ENCODE measurements at regions of chr20 and their contacts with region 1.

Region 1: GRCh38 chr20:52129611-52130010 is 62.0 kb downstream of the ZFP64 start:
- DNase-seq: no peak
- H3K4me3 ChIP-seq: no peak overlapping the region
- H3K27ac ChIP-seq: no peak overlapping the region
- H3K4me1 ChIP-seq: peaks cover 0 to 14% (median 3%) of the 10 kb centered on the region in 4 experiments
- H3K27me3 ChIP-seq: no peaks in the 10 kb centered on the region

Region 2: DNA sequence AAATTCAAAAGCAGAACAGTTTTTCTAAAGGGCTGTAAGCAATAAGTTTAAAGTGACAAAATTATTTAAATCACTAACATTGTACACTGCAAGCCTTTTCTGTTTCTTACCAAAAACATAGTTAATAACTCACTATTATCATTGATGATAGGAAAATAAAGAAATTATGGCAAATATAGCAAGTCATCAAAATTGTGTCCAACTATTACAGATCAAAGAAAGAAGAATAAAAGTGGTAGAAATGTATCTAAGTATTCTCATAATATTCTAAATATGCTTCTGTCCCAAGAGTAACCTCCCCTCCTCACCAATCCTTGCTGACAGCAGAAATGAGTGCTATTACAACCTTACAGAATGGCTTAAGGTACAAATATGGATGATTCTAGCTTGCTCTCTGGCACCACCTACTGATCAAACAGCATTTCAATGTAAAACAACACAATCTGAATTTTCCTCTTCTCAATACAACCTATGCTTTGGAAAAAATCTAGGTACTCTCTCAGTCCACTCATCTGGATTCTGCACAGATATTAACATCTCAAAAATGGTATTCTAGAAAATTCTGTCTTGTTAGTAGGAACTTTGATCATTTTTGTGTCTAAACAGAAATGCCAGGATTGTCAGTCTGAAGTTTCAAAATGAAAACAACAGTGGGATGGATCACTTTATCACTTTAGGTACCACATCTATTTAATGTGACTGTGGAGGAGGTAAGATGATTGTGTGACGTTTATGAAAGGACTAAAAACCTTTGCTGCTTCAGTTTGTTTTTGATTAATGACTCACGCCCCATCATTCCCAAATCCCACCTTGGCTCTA is 21.0 kb after region 1 on chr20:
- CTCF ChIA-PET with region 1: interaction called, 13 read pairs
- POLR2A ChIA-PET with region 1: no interaction called
- DNase-seq: peak; percentile 44 to 68 (median 61)
- H3K4me3 ChIP-seq: no peak overlapping the region
- H3K27ac ChIP-seq: no peak overlapping the region
- H3K4me1 ChIP-seq: no peaks in the 10 kb centered on the region
- H3K27me3 ChIP-seq: no peaks in the 10 kb centered on the region